ENCODE measurements at regions of chr6 and their contacts with region 1.

Region 1: DNA sequence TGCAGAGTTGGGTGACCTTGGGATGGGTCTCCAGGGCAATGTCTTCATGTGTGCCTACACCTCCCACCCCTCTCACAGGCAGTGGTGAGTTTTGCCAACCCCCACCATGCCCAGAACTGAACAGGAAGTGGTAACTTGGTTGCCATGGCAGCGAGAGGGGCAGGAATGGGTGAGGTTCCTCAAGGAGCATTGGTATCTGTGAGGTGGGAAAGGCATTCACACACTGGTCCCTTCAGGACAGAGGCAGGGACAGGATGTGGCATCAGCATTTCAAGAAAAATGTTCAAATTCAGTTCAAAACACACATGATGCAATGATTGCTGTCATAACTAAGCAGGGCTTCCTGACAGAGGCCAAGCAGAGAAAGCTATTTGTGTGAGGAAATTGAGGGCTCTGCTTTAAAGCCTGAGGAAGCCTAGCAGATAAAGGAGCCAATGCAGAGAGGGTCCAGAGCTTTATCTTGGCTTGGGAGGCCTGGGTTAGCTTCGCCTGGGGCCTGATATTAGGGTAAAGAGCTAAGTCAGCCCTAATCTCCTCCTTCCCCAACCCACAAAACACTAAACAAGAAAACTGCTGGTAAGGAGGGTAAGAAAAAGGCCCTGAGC is 551 bp downstream of the TREML2 start:
- DNase-seq: no peak
- ATAC-seq: peak; percentile 29
- H3K4me3 Mint-ChIP-seq: peak overlapping the region; percentile 75
- H3K27ac Mint-ChIP-seq: peak overlapping the region; percentile 96
- H3K4me1 Mint-ChIP-seq: peaks cover 86% of the 10 kb centered on the region
- H3K27me3 Mint-ChIP-seq: no peaks in the 10 kb centered on the region
- CTCF ChIP-seq: no peak

Region 2: GRCh38 chr6:41159415-41160082 is 40.8 kb before region 1 on chr6:
- CTCF ChIA-PET with region 1: no interaction called
- POLR2A ChIA-PET with region 1: no interaction called
- intact Hi-C with region 1: no loop called
- DNase-seq: no peak
- ATAC-seq: no peak
- H3K4me3 Mint-ChIP-seq: no peak overlapping the region
- H3K27ac Mint-ChIP-seq: no peak overlapping the region
- H3K4me1 Mint-ChIP-seq: peaks cover 2% of the 10 kb centered on the region
- H3K27me3 Mint-ChIP-seq: peaks cover 14% of the 10 kb centered on the region
- CTCF ChIP-seq: no peak

Region 3: GRCh38 chr6:41182069-41183034 is 18.0 kb before region 1 on chr6:
- CTCF ChIA-PET with region 1: interaction called, 5 read pairs
- POLR2A ChIA-PET with region 1: interaction called, 21 read pairs
- intact Hi-C with region 1: no loop called
- DNase-seq: no peak
- ATAC-seq: peak; percentile 88
- H3K4me3 Mint-ChIP-seq: no peak overlapping the region
- H3K27ac Mint-ChIP-seq: peak overlapping the region; percentile 76
- H3K4me1 Mint-ChIP-seq: peaks cover 54% of the 10 kb centered on the region
- H3K27me3 Mint-ChIP-seq: no peaks in the 10 kb centered on the region
- CTCF ChIP-seq: no peak

Region 4: DNA sequence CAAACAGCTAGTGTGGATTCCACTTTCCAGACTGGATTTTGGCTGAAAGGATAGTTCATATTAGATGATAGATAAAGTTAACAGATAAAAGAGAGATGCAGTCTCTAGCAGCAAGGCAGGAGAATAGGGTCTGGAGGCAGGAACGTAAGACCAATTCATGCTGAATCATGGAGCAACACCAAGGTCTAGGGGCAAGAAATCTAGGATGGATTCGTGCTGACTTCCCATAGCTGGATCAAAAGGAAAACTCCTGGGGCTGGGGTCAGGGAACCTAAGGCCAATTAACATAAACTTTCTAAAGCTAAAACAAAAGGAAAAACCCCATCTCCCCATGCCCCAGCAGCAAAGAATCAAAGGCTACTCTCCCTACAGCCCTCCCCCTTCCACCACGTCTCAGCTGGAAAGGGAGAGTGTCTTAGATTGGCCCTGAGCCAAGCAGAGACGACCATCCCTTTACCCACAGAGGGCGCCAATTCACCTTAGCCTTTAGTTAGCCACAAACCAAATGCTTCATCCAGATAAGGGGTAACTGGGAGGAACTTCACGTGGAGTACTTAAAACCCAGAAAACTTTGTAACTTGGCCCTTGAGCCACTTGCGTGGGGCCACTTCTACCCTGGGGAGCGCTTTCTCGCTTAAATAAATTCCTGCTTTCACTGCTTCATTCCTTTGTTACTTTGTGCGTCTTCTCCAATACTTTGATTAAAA is 78.5 kb after region 1 on chr6:
- CTCF ChIA-PET with region 1: interaction called, 8 read pairs
- POLR2A ChIA-PET with region 1: interaction called, 7 read pairs
- intact Hi-C with region 1: loop called (anchors 2 kb)
- DNase-seq: peak; percentile 29
- ATAC-seq: peak; percentile 86
- H3K4me3 Mint-ChIP-seq: peak overlapping the region; percentile 16
- H3K27ac Mint-ChIP-seq: no peak overlapping the region
- H3K4me1 Mint-ChIP-seq: peaks cover 34% of the 10 kb centered on the region
- H3K27me3 Mint-ChIP-seq: peaks cover 1% of the 10 kb centered on the region
- CTCF ChIP-seq: no peak

Measured in activated B cell treated with CpG ODN at 0.5 μM for 24 hours (primary cell).